ENCODE measurements at regions of chr6 and their contacts with region 1.

Region 1: GRCh38 chr6:107820338-107821261 is 3.5 kb downstream of the SCML4 start:
- DNase-seq: no peak
- ATAC-seq: peak; percentile 23
- H3K4me3 Mint-ChIP-seq: peak overlapping the region; percentile 86
- H3K27ac Mint-ChIP-seq: peak overlapping the region; percentile 85
- H3K4me1 Mint-ChIP-seq: peaks cover 74% of the 10 kb centered on the region
- H3K27me3 Mint-ChIP-seq: no peaks in the 10 kb centered on the region
- CTCF ChIP-seq: no peak

Region 2: GRCh38 chr6:107021446-107022185 is 799.0 kb before region 1 on chr6:
- CTCF ChIA-PET with region 1: no interaction called
- POLR2A ChIA-PET with region 1: no interaction called
- intact Hi-C with region 1: loop called (anchors 10 kb)
- DNase-seq: no peak
- ATAC-seq: no peak
- H3K4me3 Mint-ChIP-seq: no peak overlapping the region
- H3K27ac Mint-ChIP-seq: no peak overlapping the region
- H3K4me1 Mint-ChIP-seq: peaks cover 9% of the 10 kb centered on the region
- H3K27me3 Mint-ChIP-seq: no peaks in the 10 kb centered on the region
- CTCF ChIP-seq: no peak

Region 3: DNA sequence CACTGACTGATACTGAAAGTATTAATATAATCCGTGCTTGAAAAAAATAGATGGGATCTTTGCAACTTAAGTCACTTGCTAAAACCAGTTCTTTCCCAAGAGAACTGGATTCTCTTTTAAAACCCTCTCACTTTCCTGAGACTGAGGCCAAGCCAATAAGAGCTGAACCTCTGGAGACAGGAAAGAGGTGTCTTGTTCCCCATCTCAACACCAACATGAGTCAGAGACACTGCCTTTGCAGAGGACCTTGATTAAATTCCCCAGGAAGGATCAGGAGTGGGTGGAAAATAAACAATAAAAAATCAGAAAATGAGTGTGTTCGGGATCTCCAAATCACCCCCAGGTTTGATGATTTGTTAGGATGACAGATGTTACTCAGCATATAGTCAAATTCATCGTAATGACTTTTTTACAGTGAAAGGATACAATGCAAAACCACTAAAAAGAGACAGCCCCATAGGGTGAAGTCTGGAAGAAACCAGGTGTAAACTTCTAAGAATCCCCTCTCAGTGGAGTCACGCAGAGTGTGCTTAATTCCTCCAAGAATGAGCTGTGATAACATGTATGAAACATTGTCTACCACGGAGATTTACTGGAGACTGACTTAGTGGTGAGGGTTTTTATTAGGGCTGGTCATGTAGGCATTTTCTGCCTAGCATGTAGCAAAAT is 582.5 kb before region 1 on chr6:
- CTCF ChIA-PET with region 1: no interaction called
- POLR2A ChIA-PET with region 1: no interaction called
- intact Hi-C with region 1: no loop called
- DNase-seq: no peak
- ATAC-seq: no peak
- H3K4me3 Mint-ChIP-seq: no peak overlapping the region
- H3K27ac Mint-ChIP-seq: no peak overlapping the region
- H3K4me1 Mint-ChIP-seq: no peaks in the 10 kb centered on the region
- H3K27me3 Mint-ChIP-seq: no peaks in the 10 kb centered on the region
- CTCF ChIP-seq: no peak

Region 4: GRCh38 chr6:107716688-107717089 is 103.9 kb before region 1 on chr6:
- CTCF ChIA-PET with region 1: no interaction called
- POLR2A ChIA-PET with region 1: no interaction called
- intact Hi-C with region 1: loop called (anchors 5 kb)
- DNase-seq: no peak
- ATAC-seq: peak; percentile 93
- H3K4me3 Mint-ChIP-seq: peak overlapping the region; percentile 86
- H3K27ac Mint-ChIP-seq: peak overlapping the region; percentile 93
- H3K4me1 Mint-ChIP-seq: peaks cover 28% of the 10 kb centered on the region
- H3K27me3 Mint-ChIP-seq: no peaks in the 10 kb centered on the region
- CTCF ChIP-seq: no peak

Region 5: DNA sequence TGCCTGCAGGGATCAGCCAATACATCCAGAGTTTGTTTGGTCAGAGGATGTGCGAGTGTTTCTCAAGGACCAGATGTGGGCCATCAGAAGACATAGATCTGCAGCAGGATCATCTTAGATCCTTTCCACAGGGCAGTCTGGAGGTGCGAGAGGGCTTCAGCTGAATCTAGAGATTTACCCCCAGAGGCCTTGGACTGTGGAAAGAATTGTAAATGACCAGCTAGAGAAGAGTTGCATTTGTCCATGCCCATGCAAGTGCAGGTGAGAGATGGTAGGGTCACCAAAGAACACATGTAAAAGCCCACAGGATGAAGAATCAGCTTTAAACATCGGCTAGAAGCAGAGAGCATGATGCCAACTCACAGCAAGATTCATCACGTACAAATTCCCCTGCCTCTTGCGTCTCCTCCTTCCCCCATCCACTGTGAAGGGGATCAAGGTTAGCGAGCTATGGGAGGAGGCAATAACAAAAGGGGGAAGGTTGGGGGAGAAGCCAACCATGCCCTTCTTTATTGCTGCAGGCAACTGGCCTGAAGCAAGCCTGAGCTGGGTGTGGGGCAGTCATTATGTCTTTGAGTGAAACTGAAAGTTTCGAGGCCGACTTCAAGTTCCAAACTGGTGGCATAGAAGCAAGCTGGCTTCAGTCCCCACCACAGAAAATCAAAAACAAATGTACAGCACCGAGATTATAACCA is 80.0 kb before region 1 on chr6:
- CTCF ChIA-PET with region 1: no interaction called
- POLR2A ChIA-PET with region 1: no interaction called
- intact Hi-C with region 1: loop called (anchors 5 kb)
- DNase-seq: no peak
- ATAC-seq: peak; percentile 58
- H3K4me3 Mint-ChIP-seq: peak overlapping the region; percentile 68
- H3K27ac Mint-ChIP-seq: peak overlapping the region; percentile 89
- H3K4me1 Mint-ChIP-seq: peaks cover 31% of the 10 kb centered on the region
- H3K27me3 Mint-ChIP-seq: no peaks in the 10 kb centered on the region
- CTCF ChIP-seq: no peak